ENCODE measurements at regions of chr14 and their contacts with region 1.

Region 1: DNA sequence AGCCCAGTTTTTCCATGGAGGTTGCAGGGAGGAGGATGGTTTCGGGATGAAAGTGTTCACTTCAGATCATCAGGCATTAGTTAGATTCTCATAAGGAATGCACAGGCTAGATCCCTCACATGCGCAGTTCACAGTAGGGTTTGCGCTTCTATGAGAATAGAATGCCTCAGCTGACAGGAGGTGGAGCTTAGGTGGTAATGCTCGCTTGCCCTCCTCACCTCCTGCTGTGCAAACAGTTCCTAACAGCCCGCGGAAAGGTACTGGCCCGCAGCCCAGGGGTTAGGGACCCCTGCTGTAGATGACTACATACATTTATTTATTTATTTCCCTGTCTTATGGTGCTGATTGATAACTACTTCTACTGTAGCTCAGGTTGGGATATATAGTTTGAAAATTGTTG is 93.2 kb downstream of the FBXO33 start:
- DNase-seq: no peak
- H3K4me3 Mint-ChIP-seq: no peak overlapping the region
- H3K27ac Mint-ChIP-seq: no peak overlapping the region
- H3K4me1 Mint-ChIP-seq: peaks cover 11% of the 10 kb centered on the region
- H3K27me3 Mint-ChIP-seq: no peaks in the 10 kb centered on the region

Region 2: DNA sequence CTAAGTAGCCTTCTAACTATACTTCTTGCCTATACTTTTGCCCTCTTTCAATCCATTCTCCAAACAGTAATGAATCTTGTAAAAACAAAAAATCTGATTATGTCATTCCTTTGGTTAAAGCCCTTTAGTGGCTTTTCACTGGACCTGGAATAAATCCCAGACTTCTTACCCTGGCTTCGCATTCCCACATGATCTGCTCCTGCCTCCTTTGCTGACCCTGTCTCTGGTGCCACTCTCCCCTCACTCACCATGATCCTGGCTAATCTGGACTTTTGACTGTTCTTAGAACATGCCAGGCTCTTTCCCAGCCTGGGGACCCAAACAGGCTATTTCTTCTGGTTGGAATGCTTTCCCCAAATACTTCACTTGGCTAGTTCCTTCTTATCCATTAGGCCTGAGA is 97.4 kb before region 1 on chr14:
- CTCF ChIA-PET with region 1: no interaction called
- intact Hi-C with region 1: no loop called
- DNase-seq: no peak
- H3K4me3 Mint-ChIP-seq: no peak overlapping the region
- H3K27ac Mint-ChIP-seq: no peak overlapping the region
- H3K4me1 Mint-ChIP-seq: no peaks in the 10 kb centered on the region
- H3K27me3 Mint-ChIP-seq: no peaks in the 10 kb centered on the region

Region 3: GRCh38 chr14:39426605-39427004 is 87.6 kb after region 1 on chr14:
- CTCF ChIA-PET with region 1: interaction called, 3 read pairs
- intact Hi-C with region 1: loop called (anchors 5 kb)
- DNase-seq: no peak
- H3K4me3 Mint-ChIP-seq: peak overlapping the region; percentile 45
- H3K27ac Mint-ChIP-seq: no peak overlapping the region
- H3K4me1 Mint-ChIP-seq: peaks cover 63% of the 10 kb centered on the region
- H3K27me3 Mint-ChIP-seq: no peaks in the 10 kb centered on the region